ENCODE measurements at regions of chr9 and their contacts with region 1.

Region 1: GRCh38 chr9:111631071-111631971 is at the start of gene DNAJC25:
- DNase-seq: peak; percentile 97
- H3K4me3 Mint-ChIP-seq: peak within 1 kb of the TSS; percentile 92
- H3K27ac Mint-ChIP-seq: peak within 1 kb of the TSS; percentile 79
- H3K4me1 Mint-ChIP-seq: peaks cover 42% of the 10 kb centered on the region
- H3K27me3 Mint-ChIP-seq: no peaks in the 10 kb centered on the region
- total RNA-seq, gene DNAJC25: 3.4 to 3.9 TPM

Region 2: DNA sequence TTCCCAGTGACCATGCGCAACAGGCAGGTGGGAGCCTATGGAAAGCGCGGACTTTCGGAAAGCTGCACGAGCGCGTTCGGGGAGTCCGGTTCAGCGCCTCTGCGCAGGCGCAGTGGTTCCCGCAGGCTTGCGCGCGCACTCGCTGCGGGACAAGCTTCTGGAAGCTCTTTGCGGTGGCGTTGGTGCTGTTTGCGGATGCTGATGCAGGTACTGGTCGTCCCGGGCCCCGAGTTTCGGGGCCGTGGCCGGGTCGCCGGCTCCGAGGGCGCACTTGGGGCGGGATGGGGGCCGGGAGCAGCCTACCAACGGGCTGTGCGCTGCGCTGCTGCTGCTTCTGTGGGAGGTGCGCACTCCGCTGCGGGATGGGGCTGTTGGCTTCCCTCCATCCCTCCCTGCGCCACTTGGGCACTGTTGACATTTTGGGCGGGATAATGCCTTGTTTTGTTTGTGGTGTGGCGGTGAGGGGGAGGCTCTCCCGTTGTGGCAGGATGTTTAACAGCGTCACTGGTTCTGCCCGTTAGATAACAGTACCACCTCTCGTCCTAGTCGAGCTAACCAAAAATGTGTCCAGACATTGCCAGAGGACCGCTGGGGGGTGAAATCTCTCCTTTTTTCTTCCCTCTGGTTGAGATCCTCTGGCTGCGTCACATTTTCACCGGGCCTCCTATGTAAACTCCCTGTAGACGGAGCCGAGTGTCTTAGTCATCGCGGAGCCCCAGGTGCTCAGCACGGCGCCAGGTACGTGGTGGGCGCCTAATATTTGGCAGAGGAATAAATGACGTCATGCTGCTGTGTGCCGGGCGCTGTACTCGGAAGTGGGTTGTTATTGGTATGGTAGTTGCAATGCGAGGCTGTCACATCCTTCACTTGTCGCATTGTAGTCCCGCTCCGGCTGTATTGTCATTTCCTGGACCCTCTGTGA is 106.0 kb before region 1 on chr9 and contains the start of gene ZNF483:
- CTCF ChIA-PET with region 1: no interaction called
- intact Hi-C with region 1: loop called (anchors 1 kb)
- DNase-seq: peak; percentile 73
- H3K4me3 Mint-ChIP-seq: peak within 1 kb of the TSS; percentile 89
- H3K27ac Mint-ChIP-seq: peak within 1 kb of the TSS; percentile 80
- H3K4me1 Mint-ChIP-seq: peaks cover 11% of the 10 kb centered on the region
- H3K27me3 Mint-ChIP-seq: no peaks in the 10 kb centered on the region
- total RNA-seq, gene ZNF483: 2.3 TPM

Region 3: DNA sequence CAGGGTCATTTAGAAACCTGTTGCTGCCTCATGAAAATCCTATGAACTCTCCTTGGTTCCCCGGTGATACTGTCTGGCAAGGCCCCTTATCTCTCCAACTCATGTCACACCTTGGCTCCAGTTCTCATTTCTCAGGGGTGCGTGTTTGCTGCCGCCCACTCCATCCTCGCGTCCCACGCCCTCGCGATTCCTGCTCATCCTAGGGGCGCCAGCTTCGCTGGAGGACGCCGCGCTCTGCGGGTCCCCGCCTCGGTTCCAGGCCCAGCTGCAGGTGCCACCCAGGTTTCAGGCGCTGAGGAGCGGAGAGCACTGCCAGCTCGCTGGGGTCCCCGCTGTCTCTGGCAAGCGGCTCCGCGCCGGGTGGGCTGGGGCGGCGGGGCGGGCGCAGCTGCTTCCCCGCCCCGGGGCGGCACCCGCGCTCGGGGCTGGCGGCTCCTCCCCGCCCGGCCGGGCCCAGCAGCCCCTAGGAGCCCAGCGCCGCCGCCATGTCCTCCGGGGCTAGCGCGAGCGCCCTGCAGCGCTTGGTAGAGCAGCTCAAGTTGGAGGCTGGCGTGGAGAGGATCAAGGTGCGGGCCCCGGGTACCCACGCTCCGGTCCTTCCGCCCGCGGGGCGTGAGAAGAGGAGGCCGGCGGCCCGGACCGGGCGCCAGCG is 30.0 kb after region 1 on chr9 and contains the start of gene GNG10:
- CTCF ChIA-PET with region 1: no interaction called
- intact Hi-C with region 1: loop called (anchors 1 kb)
- DNase-seq: peak; percentile 63
- H3K4me3 Mint-ChIP-seq: peak within 1 kb of the TSS; percentile 97
- H3K27ac Mint-ChIP-seq: peak within 1 kb of the TSS; percentile 95
- H3K4me1 Mint-ChIP-seq: peaks cover 31% of the 10 kb centered on the region
- H3K27me3 Mint-ChIP-seq: peaks cover 2% of the 10 kb centered on the region
- total RNA-seq, gene GNG10: 20.6 to 21.1 TPM

Region 4: DNA sequence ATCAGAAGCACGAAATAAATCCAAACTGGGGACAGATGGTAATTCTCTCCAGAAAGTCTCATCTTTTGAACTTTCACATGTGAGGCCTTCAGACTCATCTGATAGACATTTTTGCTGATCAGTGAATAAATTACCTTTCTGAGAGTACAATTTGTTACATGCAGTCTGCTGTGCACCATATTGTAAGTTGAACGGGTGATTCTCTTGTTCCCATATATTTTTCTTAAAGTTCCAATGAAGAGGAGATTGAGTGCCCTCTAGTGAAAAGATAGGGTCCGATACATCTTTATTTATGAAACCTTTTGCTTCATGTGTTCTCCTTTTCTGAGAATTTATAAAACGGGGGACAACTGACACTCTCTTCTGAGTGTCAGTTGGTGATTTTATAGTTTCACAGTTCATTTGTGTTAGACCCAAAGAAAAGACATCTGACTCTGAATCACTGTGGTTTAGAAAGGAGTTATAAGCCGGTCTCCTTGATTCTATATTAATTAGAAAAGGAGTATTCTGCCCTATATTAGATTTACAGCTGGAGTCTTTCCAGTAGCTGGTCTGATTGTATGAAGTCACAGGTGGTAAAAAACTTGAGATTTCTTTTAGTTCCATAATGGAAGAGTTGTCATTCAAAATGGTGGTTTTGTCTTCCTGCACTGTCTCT is 60.5 kb after region 1 on chr9:
- CTCF ChIA-PET with region 1: no interaction called
- intact Hi-C with region 1: loop called (anchors 1 kb)
- DNase-seq: no peak
- H3K4me3 Mint-ChIP-seq: no peak overlapping the region
- H3K27ac Mint-ChIP-seq: no peak overlapping the region
- H3K4me1 Mint-ChIP-seq: peaks cover 3% of the 10 kb centered on the region
- H3K27me3 Mint-ChIP-seq: no peaks in the 10 kb centered on the region